Activated B cell treated with CpG ODN at 0.5 μM for 24 hours (primary cell): ENCODE measurements at regions of chr7 and their contacts with region 1.

Region 1: DNA sequence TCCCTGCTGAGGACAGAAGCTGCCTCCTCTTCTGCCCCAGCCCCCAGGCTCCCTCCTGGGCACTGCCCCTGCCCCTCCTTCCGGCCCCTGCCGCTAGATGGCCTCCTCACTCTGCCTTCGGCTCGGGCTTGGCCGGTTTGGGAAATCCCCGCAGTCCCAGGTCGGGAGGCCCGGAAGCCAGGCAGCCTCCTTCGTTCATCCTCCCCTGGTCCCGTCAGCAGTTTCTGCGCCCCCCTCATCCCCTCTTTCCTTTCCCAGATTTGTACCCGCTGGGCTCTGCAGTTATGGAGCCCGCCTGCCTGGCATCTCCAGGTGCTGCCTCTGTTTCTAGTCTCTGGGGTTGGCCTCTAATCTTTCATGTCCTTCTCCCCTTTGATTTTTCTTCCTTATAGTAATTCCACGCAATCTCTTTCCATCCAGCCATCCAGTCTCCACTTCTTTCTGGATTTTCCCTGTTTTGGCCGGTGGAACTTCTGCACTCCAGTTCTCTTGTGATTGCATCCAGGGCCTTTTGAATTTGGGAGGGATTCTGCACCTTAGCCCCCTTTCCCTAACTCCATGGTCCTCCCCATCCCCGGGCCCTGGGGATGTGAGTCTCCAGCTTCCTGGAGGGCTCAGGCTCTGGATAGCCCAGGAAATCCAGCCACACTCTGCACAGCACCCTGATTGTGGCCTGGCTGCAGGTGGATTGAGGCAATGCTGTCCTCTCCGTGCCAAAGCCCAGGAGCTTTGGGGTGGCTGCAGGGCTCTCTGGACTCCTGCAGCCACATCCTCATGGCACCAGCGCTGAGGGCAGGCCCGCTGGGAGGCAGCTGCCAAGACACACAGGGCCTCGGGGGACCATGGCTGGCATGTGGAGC is 3.3 kb upstream of the SHH start:
- DNase-seq: peak; percentile 46
- ATAC-seq: peak; percentile 82
- H3K4me3 Mint-ChIP-seq: peak overlapping the region; percentile 49
- H3K27ac Mint-ChIP-seq: no peak overlapping the region
- H3K4me1 Mint-ChIP-seq: peaks cover 11% of the 10 kb centered on the region
- H3K27me3 Mint-ChIP-seq: peaks cover 55% of the 10 kb centered on the region
- CTCF ChIP-seq: no peak

Region 2: DNA sequence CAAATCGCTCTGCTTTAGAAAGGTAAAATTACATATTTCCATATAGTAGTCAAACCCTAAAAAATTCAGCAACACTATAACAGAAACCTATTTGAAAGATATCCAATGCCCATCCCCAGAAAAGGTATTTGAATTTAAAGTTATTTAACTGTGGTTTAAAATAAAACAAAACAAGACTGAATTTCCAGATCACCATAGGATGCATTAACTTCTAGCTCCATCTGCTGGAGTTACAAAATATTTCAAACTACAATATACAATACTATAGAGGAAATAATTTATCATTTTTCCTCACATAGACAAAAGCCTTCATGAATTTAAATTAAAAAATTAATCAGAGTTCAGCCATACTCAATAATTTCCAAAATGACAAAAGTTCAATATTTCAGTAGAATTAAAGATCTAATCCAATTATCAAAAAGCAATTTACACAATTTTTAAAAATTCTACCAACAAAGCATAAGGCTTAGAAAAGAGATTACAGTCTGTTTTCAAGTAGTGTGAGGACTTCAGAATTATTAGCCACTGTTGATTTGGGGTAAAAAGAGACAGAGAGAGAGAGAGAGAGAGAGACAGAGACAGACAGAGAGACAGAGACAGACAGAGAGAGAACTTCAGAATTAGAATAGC is 1001.5 kb after region 1 on chr7:
- CTCF ChIA-PET with region 1: no interaction called
- POLR2A ChIA-PET with region 1: no interaction called
- intact Hi-C with region 1: loop called (anchors 1 kb)
- DNase-seq: no peak
- ATAC-seq: no peak
- H3K4me3 Mint-ChIP-seq: no peak overlapping the region
- H3K27ac Mint-ChIP-seq: no peak overlapping the region
- H3K4me1 Mint-ChIP-seq: no peaks in the 10 kb centered on the region
- H3K27me3 Mint-ChIP-seq: no peaks in the 10 kb centered on the region
- CTCF ChIP-seq: peak; percentile 30